CD8-positive, alpha-beta T cell (primary cell): ENCODE measurements at regions of chr10 and their contacts with region 1.

Region 1: DNA sequence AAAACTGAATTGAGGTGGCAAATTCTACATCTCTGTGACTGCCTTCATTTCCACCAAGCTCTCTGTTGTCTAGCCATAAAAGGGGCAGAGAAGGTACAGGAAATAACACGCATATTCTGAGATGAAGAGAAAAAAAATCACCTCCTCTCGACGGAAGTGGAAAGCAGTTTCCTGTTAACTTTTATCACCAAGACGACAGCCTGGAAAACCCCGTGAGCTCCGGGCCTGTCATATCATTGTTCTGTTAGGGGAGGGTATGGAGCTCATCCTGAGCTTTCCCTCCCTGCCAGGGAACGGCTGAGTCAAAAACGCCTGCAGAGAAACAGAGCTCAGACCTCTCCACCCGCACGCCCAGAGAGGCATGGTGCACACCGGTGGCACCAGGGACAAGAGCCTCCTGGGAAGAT is 200.3 kb downstream of the PRPF18 start:
- DNase-seq: peak; percentile 54 to 97 (median 75)
- ATAC-seq: peak; percentile 85
- H3K4me3 ChIP-seq: peak overlapping the region; percentile 23 to 28
- H3K4me3 Mint-ChIP-seq: peak overlapping the region; percentile 82
- H3K27ac ChIP-seq: peak overlapping the region; percentile 82 to 97
- H3K27ac Mint-ChIP-seq: no peak overlapping the region
- H3K4me1 ChIP-seq: peaks cover 47% of the 10 kb centered on the region
- H3K4me1 Mint-ChIP-seq: peaks cover 32% of the 10 kb centered on the region
- H3K27me3 ChIP-seq: no peaks in the 10 kb centered on the region
- H3K27me3 Mint-ChIP-seq: no peaks in the 10 kb centered on the region
- CTCF ChIP-seq: no peak

Region 2: GRCh38 chr10:13586676-13587355 is 200.2 kb before region 1 on chr10 and contains the start of gene PRPF18:
- CTCF ChIA-PET with region 1: no interaction called
- POLR2A ChIA-PET with region 1: interaction called, 4 read pairs
- intact Hi-C with region 1: loop called in 1 of 2 experiments (anchors 2 kb)
- DNase-seq: peak; percentile 92 to 97 (median 95)
- ATAC-seq: peak; percentile 99
- H3K4me3 ChIP-seq: peak within 1 kb of the TSS; percentile 97
- H3K4me3 Mint-ChIP-seq: peak within 1 kb of the TSS; percentile 100
- H3K27ac ChIP-seq: peak within 1 kb of the TSS; percentile 69 to 73
- H3K27ac Mint-ChIP-seq: peak within 1 kb of the TSS; percentile 99
- H3K4me1 ChIP-seq: peaks cover 16% of the 10 kb centered on the region
- H3K4me1 Mint-ChIP-seq: peaks cover 41% of the 10 kb centered on the region
- H3K27me3 ChIP-seq: peaks cover 3 to 4% of the 10 kb centered on the region in 2 experiments
- H3K27me3 Mint-ChIP-seq: peaks cover 18% of the 10 kb centered on the region
- CTCF ChIP-seq: peak; percentile 96
- total RNA-seq, gene PRPF18: 29.4 to 29.6 TPM

Region 3: DNA sequence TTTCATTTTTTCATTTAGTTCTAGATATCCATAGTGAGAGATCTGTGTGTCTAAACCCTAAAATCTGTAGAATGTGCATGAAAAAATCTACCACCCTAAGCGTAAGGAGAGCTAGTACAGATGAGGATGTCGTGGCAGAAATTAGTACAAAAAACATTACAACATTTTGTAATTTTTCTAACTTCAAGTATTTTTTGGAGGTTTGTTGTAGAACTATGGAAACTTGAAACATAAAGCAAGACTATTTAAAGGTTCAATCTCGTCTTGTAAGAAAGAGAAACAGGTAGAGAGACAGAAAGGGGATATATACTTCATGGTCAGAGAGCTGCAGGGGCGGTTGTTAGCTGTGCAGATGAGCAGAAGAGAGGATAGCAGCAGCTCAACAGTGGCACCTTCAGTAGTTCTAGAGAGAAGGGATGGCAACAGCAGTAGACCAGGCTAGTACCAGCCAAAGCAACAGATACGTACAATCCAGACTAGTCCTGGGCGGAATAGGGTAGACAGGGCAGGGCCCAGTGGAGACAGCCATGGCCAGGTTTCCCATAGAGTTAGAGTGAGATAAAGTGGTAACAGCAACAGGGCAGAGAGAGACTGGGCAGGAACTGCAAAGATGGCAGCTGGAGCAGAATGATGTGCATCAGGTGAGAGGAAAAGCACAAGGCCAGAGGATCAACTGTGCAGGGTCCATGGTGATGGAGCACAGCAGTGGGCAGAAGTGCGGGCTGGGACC is 398.5 kb after region 1 on chr10:
- CTCF ChIA-PET with region 1: interaction called, 3 read pairs
- POLR2A ChIA-PET with region 1: no interaction called
- intact Hi-C with region 1: loop called in 1 of 2 experiments (anchors 2 kb)
- DNase-seq: peak in 5 of 9 experiments; percentile 16 to 86 (median 56)
- ATAC-seq: peak; percentile 76
- H3K4me3 ChIP-seq: peak overlapping the region; percentile 2 to 14
- H3K4me3 Mint-ChIP-seq: peak overlapping the region; percentile 48
- H3K27ac ChIP-seq: peak overlapping the region; percentile 30 to 75
- H3K27ac Mint-ChIP-seq: peak overlapping the region; percentile 91
- H3K4me1 ChIP-seq: peaks cover 19% of the 10 kb centered on the region
- H3K4me1 Mint-ChIP-seq: peaks cover 25% of the 10 kb centered on the region
- H3K27me3 ChIP-seq: peaks cover 0 to 4% of the 10 kb centered on the region in 2 experiments
- H3K27me3 Mint-ChIP-seq: peaks cover 15% of the 10 kb centered on the region
- CTCF ChIP-seq: no peak

Region 4: DNA sequence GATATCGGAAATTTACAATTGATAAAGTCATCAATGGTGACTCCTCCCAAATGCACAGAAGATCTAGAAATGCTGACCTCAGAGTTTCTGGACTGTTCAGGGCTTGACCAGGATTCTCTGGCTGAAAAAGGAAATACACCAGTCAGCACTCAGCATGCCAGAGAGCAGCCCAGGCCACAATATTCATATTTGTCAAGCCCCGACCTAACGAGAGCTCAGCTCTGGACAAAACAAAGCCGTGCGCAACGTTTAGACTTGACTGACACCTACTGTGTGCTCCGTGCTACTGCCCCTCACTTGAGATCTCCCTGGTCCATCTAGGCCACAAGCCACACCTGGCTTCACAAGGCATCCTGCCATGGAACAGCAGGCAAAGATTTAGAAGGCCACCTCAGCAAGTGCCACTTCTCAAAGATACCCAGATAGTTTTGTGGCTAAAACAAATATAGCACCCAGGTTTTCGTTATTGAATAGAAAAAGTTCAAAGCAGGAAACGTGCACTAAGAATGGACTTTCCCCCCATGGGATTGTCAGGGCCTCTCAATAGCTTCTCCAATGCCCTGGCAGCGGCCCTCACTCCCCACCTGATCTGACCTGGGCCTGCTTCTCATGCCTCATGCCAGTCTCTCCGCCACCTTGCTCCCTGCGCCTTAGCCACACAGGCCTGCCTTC is 769.4 kb after region 1 on chr10:
- CTCF ChIA-PET with region 1: no interaction called
- POLR2A ChIA-PET with region 1: no interaction called
- intact Hi-C with region 1: loop called in 1 of 2 experiments (anchors 5 kb)
- DNase-seq: peak in 4 of 9 experiments; percentile 5 to 76 (median 56)
- ATAC-seq: peak; percentile 24
- H3K4me3 ChIP-seq: no peak overlapping the region
- H3K4me3 Mint-ChIP-seq: peak overlapping the region; percentile 27
- H3K27ac ChIP-seq: peak overlapping the region in 1 of 2 experiments; percentile 82
- H3K27ac Mint-ChIP-seq: peak overlapping the region; percentile 86
- H3K4me1 ChIP-seq: peaks cover 98% of the 10 kb centered on the region
- H3K4me1 Mint-ChIP-seq: peaks cover 93% of the 10 kb centered on the region
- H3K27me3 ChIP-seq: no peaks in the 10 kb centered on the region
- H3K27me3 Mint-ChIP-seq: no peaks in the 10 kb centered on the region
- CTCF ChIP-seq: no peak

Region 5: GRCh38 chr10:14723052-14723689 is 936.2 kb after region 1 on chr10:
- CTCF ChIA-PET with region 1: no interaction called
- POLR2A ChIA-PET with region 1: no interaction called
- intact Hi-C with region 1: loop called in 1 of 2 experiments (anchors 10 kb)
- DNase-seq: peak in 6 of 9 experiments; percentile 15 to 74 (median 50)
- ATAC-seq: peak; percentile 67
- H3K4me3 ChIP-seq: no peak overlapping the region
- H3K4me3 Mint-ChIP-seq: peak overlapping the region; percentile 17
- H3K27ac ChIP-seq: peak overlapping the region in 1 of 2 experiments; percentile 58
- H3K27ac Mint-ChIP-seq: peak overlapping the region; percentile 84
- H3K4me1 ChIP-seq: peaks cover 36% of the 10 kb centered on the region
- H3K4me1 Mint-ChIP-seq: peaks cover 34% of the 10 kb centered on the region
- H3K27me3 ChIP-seq: no peaks in the 10 kb centered on the region
- H3K27me3 Mint-ChIP-seq: no peaks in the 10 kb centered on the region
- CTCF ChIP-seq: no peak

Region 6: DNA sequence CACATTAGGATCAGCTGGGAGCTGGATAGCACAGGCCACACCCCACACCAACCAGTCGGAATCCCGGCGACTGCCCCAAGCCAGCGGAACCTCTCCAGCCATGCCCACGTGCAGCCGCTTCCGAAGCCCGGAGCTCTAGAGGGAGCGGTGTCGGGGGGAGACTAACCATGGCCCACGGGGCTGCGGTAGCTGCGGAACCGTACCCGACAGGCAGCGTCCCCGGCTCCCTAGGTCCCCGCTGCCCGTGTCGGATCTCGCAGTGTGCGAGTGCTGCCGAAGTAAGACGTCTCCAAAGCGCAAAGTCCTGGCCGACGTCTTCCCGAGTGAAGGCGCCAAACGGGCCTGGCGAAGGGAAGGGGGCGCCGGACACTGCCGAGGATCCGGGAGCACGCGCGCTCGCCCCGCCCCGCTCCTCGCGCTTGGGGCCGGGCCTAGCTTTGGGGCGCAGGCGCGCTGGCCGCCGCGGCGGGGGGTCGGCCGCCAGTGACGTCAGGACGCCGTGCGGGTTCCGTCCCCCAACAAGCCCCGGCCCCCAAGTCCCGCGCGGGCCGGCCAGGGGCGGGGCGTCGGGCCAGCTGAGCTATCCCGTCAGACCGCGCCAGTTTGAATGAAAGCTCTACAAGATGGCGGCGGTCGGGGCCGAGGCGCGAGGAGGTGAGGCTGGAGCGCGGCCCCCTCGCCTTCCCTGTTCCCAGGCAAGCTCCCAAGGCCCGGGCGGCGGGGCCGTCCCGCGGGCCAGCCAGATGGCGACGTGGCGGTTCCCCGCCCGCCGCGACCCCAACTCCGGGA is 1091.4 kb after region 1 on chr10 and contains the start of gene SUV39H2:
- CTCF ChIA-PET with region 1: no interaction called
- POLR2A ChIA-PET with region 1: no interaction called
- intact Hi-C with region 1: loop called in 1 of 2 experiments (anchors 1 kb)
- DNase-seq: peak; percentile 78 to 96 (median 92)
- ATAC-seq: peak; percentile 80
- H3K4me3 ChIP-seq: peak within 1 kb of the TSS; percentile 92 to 94
- H3K4me3 Mint-ChIP-seq: peak within 1 kb of the TSS; percentile 96
- H3K27ac ChIP-seq: peak within 1 kb of the TSS; percentile 67 to 69
- H3K27ac Mint-ChIP-seq: peak within 1 kb of the TSS; percentile 79
- H3K4me1 ChIP-seq: peaks cover 26% of the 10 kb centered on the region
- H3K4me1 Mint-ChIP-seq: peaks cover 31% of the 10 kb centered on the region
- H3K27me3 ChIP-seq: no peaks in the 10 kb centered on the region
- H3K27me3 Mint-ChIP-seq: no peaks in the 10 kb centered on the region
- CTCF ChIP-seq: no peak
- total RNA-seq, gene SUV39H2: 2.6 to 3.1 TPM